Activated CD4-positive, alpha-beta T cell treated with anti-CD3 and anti-CD28 coated beads, Interleukin-2, amount 10 ng/mL, durations not matched to agents 24 days and 14 days (primary cell): ENCODE measurements at regions of chr12 and their contacts with region 1.

Region 1: GRCh38 chr12:80178846-80179245 is 79.5 kb downstream of the OTOGL start:
- DNase-seq: no peak
- H3K4me3 Mint-ChIP-seq: peak overlapping the region; percentile 16
- H3K27ac Mint-ChIP-seq: peak overlapping the region; percentile 60
- H3K4me1 Mint-ChIP-seq: peaks cover 11% of the 10 kb centered on the region
- H3K27me3 Mint-ChIP-seq: peaks cover 10% of the 10 kb centered on the region

Region 2: DNA sequence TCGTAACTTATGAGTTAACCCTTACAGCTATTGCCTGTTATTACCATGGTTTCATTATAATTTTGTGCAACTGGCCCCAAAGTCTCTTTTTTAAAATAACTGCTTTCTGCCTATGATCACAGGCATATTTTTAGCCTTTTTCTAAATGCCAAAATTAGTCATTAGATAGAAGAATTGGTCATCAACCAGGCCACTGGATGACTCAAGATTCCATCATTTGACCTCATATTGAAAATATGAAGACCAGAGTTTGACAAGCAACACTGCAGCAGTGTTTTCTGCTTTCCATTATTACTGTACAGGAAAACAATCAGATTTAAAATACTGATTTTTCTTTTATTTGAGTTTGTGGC is 134.2 kb before region 1 on chr12:
- intact Hi-C with region 1: loop called (anchors 5 kb)
- DNase-seq: no peak
- H3K4me3 Mint-ChIP-seq: no peak overlapping the region
- H3K27ac Mint-ChIP-seq: no peak overlapping the region
- H3K4me1 Mint-ChIP-seq: peaks cover 4% of the 10 kb centered on the region
- H3K27me3 Mint-ChIP-seq: no peaks in the 10 kb centered on the region

Region 3: GRCh38 chr12:80142640-80143039 is 36.2 kb before region 1 on chr12:
- intact Hi-C with region 1: no loop called
- DNase-seq: no peak
- H3K4me3 Mint-ChIP-seq: no peak overlapping the region
- H3K27ac Mint-ChIP-seq: no peak overlapping the region
- H3K4me1 Mint-ChIP-seq: peaks cover 4% of the 10 kb centered on the region
- H3K27me3 Mint-ChIP-seq: peaks cover 15% of the 10 kb centered on the region